Activated naive CD4-positive, alpha-beta T cell treated with anti-CD3 and anti-CD28 coated beads for 36 hours (primary cell): ENCODE measurements at regions of chr4 and their contacts with region 1.

Region 1: DNA sequence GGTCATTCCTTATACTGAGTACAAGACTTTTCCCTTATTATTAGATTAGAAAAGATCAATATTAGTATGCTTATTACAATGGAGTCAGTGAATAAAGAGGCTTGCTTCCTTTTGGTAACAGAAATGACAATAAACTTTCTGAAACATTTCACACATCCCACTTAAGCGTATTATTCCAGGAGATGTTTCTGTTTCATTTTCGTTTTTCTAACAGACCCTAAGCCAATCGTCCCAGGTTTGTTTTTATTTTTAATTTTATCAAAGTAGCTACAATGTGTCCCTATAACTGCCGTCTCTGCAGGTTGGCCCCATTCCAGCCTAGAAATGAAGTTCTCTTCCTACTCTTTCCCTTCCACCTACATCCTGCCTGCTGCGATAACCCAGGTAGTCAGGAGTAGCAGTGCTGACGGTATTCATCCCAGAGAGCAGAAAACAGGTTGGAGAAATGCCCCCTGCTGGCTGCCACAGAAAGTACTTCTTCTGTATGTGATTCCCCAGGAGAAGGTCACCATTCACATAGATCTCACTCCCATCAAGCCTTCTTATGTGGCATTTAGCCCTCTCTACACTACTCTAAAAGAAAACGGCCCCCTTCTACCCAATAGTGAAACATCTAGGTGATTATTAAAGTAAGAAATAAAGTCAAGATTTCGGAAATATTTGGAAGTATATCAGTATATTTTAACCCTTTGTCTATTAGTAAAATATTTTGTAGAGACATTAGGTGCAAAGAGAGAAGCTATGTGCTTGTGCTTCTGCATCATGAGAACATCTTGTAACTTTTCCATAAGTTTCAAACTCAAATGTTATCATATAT is 40.4 kb downstream of the ENPEP start:
- DNase-seq: peak; percentile 76
- H3K4me3 Mint-ChIP-seq: peak overlapping the region; percentile 79
- H3K27ac Mint-ChIP-seq: no peak overlapping the region
- H3K4me1 Mint-ChIP-seq: peaks cover 9% of the 10 kb centered on the region
- H3K27me3 Mint-ChIP-seq: no peaks in the 10 kb centered on the region

Region 2: GRCh38 chr4:108570993-108571569 is 1945.2 kb before region 1 on chr4:
- CTCF ChIA-PET with region 1: no interaction called
- intact Hi-C with region 1: no loop called
- DNase-seq: no peak
- H3K4me3 Mint-ChIP-seq: no peak overlapping the region
- H3K27ac Mint-ChIP-seq: no peak overlapping the region
- H3K4me1 Mint-ChIP-seq: peaks cover 24% of the 10 kb centered on the region
- H3K27me3 Mint-ChIP-seq: no peaks in the 10 kb centered on the region

Region 3: GRCh38 chr4:108601532-108601931 is 1914.8 kb before region 1 on chr4:
- CTCF ChIA-PET with region 1: no interaction called
- intact Hi-C with region 1: no loop called
- DNase-seq: peak; percentile 39
- H3K4me3 Mint-ChIP-seq: no peak overlapping the region
- H3K27ac Mint-ChIP-seq: no peak overlapping the region
- H3K4me1 Mint-ChIP-seq: peaks cover 17% of the 10 kb centered on the region
- H3K27me3 Mint-ChIP-seq: no peaks in the 10 kb centered on the region

Region 4: DNA sequence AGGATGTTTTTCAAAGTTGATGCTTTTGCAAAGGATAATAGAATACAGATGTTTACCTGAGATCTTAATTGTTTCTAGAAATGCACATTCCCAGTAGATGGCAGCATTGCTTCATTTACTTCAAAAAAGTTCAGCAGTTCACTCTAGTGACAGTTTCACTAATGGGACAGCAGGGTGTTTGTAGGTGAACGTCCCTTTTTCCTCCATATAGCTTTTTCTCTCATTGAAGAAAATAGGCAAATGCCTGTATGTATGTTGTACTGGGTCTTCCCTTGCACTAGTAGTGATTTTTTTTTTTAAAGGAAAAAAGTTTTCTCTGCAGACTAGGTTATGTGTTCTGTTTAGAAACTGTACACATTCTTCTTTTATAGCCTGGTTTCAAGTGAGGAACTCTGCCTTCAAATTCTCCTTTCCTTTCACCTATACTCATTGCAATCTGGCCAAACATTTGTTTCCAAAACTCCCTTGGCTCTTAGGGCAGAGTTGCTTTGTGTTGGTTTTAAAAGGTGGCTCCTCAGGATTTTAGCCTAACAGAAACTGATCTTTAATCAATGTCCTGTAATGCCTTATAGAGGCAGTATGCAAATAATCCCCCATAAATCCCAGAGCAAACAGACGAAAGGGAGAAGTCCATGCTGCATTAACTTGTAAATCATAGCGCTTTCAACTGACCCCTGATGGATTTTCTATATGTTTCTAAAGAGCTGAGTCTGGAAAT is 517.3 kb before region 1 on chr4:
- CTCF ChIA-PET with region 1: interaction called, 371 read pairs
- intact Hi-C with region 1: loop called (anchors 1 kb)
- DNase-seq: peak; percentile 17
- H3K4me3 Mint-ChIP-seq: no peak overlapping the region
- H3K27ac Mint-ChIP-seq: no peak overlapping the region
- H3K4me1 Mint-ChIP-seq: peaks cover 8% of the 10 kb centered on the region
- H3K27me3 Mint-ChIP-seq: peaks cover 10% of the 10 kb centered on the region

Region 5: GRCh38 chr4:110049951-110050925 is 466.1 kb before region 1 on chr4:
- CTCF ChIA-PET with region 1: interaction called, 40 read pairs
- intact Hi-C with region 1: loop called (anchors 1 kb)
- DNase-seq: peak; percentile 71
- H3K4me3 Mint-ChIP-seq: no peak overlapping the region
- H3K27ac Mint-ChIP-seq: no peak overlapping the region
- H3K4me1 Mint-ChIP-seq: no peaks in the 10 kb centered on the region
- H3K27me3 Mint-ChIP-seq: no peaks in the 10 kb centered on the region

Region 6: GRCh38 chr4:110296892-110297291 is 219.4 kb before region 1 on chr4:
- CTCF ChIA-PET with region 1: interaction called, 3 read pairs
- intact Hi-C with region 1: loop called (anchors 1 kb)
- DNase-seq: no peak
- H3K4me3 Mint-ChIP-seq: no peak overlapping the region
- H3K27ac Mint-ChIP-seq: no peak overlapping the region
- H3K4me1 Mint-ChIP-seq: peaks cover 13% of the 10 kb centered on the region
- H3K27me3 Mint-ChIP-seq: peaks cover 56% of the 10 kb centered on the region

Region 7: GRCh38 chr4:110533940-110534339 is 17.6 kb after region 1 on chr4:
- CTCF ChIA-PET with region 1: interaction called, 10 read pairs
- intact Hi-C with region 1: no loop called
- DNase-seq: no peak
- H3K4me3 Mint-ChIP-seq: no peak overlapping the region
- H3K27ac Mint-ChIP-seq: no peak overlapping the region
- H3K4me1 Mint-ChIP-seq: no peaks in the 10 kb centered on the region
- H3K27me3 Mint-ChIP-seq: peaks cover 29% of the 10 kb centered on the region

Region 8: GRCh38 chr4:111066887-111067286 is 550.6 kb after region 1 on chr4:
- CTCF ChIA-PET with region 1: no interaction called
- intact Hi-C with region 1: no loop called
- DNase-seq: no peak
- H3K4me3 Mint-ChIP-seq: no peak overlapping the region
- H3K27ac Mint-ChIP-seq: no peak overlapping the region
- H3K4me1 Mint-ChIP-seq: no peaks in the 10 kb centered on the region
- H3K27me3 Mint-ChIP-seq: no peaks in the 10 kb centered on the region